ENCODE measurements at regions of chr9 and their contacts with region 1.

Region 1: DNA sequence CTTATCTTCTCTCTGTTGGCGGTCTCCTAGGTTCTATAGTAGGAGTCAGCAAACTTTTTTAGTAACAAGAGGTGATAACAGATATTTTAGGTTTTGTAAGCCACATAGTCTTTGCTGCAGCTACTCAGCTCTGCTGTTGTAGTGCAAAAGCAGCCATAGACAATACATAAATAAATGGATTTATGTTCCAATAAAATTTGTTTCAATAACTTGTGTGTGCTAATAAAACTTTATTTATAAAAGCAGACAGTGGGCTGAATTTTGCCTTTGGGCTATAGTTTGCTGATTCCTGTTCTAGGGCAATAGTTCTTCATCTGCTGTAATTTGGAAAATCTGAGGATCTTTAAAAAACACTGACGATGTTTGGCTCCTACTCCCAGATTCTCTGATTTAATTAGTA is 469.4 kb upstream of the TNC start:
- DNase-seq: no peak
- ATAC-seq: no peak
- H3K4me3 ChIP-seq: no peak overlapping the region
- H3K27ac ChIP-seq: no peak overlapping the region
- H3K4me1 ChIP-seq: no peaks in the 10 kb centered on the region
- H3K27me3 ChIP-seq: no peaks in the 10 kb centered on the region
- CTCF ChIP-seq: no peak

Region 2: DNA sequence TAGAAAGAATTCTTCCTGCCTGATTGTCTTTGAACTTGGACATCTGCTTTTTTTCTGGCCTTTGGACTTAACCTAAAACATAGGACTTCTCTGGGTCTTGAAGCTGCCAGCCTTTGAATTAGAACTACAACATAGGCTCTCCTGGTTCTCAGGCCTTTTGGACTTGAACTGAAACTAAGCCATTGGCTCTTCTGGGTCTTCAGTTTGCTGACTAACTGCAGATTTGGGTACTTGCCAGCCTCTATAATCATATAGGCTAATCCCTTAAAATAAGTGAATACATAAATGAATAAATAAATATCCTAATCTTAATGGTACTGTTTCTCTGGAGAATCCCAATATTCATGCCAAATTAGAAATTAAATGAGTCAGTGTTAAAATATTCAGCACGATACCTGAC is 92.9 kb after region 1 on chr9:
- intact Hi-C with region 1: no loop called
- DNase-seq: no peak
- ATAC-seq: no peak
- H3K4me3 ChIP-seq: no peak overlapping the region
- H3K27ac ChIP-seq: no peak overlapping the region
- H3K4me1 ChIP-seq: no peaks in the 10 kb centered on the region
- H3K27me3 ChIP-seq: no peaks in the 10 kb centered on the region
- CTCF ChIP-seq: no peak

Region 3: GRCh38 chr9:116661037-116661954 is 1074.0 kb after region 1 on chr9:
- intact Hi-C with region 1: loop called (anchors 10 kb)
- DNase-seq: no peak
- ATAC-seq: peak; percentile 85 to 87
- H3K4me3 ChIP-seq: no peak overlapping the region
- H3K27ac ChIP-seq: no peak overlapping the region
- H3K4me1 ChIP-seq: no peaks in the 10 kb centered on the region
- H3K27me3 ChIP-seq: no peaks in the 10 kb centered on the region
- CTCF ChIP-seq: peak; percentile 75